Caco-2 (cell line): ENCODE measurements at regions of chr3 and their contacts with region 1.

Region 1: GRCh38 chr3:127747723-127748521 is 74.4 kb downstream of the MGLL start:
- DNase-seq: no peak
- H3K4me3 ChIP-seq: no peak overlapping the region
- H3K4me3 Mint-ChIP-seq: no peak overlapping the region
- H3K27ac Mint-ChIP-seq: no peak overlapping the region
- H3K4me1 ChIP-seq: peaks cover 34% of the 10 kb centered on the region
- H3K4me1 Mint-ChIP-seq: peaks cover 39% of the 10 kb centered on the region
- H3K27me3 ChIP-seq: no peaks in the 10 kb centered on the region
- H3K27me3 Mint-ChIP-seq: no peaks in the 10 kb centered on the region
- CTCF ChIP-seq: no peak

Region 2: GRCh38 chr3:127729556-127730056 is 18.3 kb before region 1 on chr3:
- CTCF ChIA-PET with region 1: no interaction called
- POLR2A ChIA-PET with region 1: interaction called, 11 read pairs
- intact Hi-C with region 1: no loop called
- DNase-seq: no peak
- H3K4me3 ChIP-seq: no peak overlapping the region
- H3K4me3 Mint-ChIP-seq: no peak overlapping the region
- H3K27ac Mint-ChIP-seq: no peak overlapping the region
- H3K4me1 ChIP-seq: no peaks in the 10 kb centered on the region
- H3K4me1 Mint-ChIP-seq: no peaks in the 10 kb centered on the region
- H3K27me3 ChIP-seq: no peaks in the 10 kb centered on the region
- H3K27me3 Mint-ChIP-seq: peaks cover 4% of the 10 kb centered on the region
- CTCF ChIP-seq: no peak